Activated B cell treated with CpG ODN at 0.5 μM for 24 hours (primary cell): ENCODE measurements at regions of chr4 and their contacts with region 1.

Region 1: GRCh38 chr4:169485791-169486742 is 126.3 kb downstream of the NEK1 start:
- DNase-seq: no peak
- ATAC-seq: no peak
- H3K4me3 Mint-ChIP-seq: no peak overlapping the region
- H3K27ac Mint-ChIP-seq: no peak overlapping the region
- H3K4me1 Mint-ChIP-seq: no peaks in the 10 kb centered on the region
- H3K27me3 Mint-ChIP-seq: no peaks in the 10 kb centered on the region
- CTCF ChIP-seq: no peak

Region 2: DNA sequence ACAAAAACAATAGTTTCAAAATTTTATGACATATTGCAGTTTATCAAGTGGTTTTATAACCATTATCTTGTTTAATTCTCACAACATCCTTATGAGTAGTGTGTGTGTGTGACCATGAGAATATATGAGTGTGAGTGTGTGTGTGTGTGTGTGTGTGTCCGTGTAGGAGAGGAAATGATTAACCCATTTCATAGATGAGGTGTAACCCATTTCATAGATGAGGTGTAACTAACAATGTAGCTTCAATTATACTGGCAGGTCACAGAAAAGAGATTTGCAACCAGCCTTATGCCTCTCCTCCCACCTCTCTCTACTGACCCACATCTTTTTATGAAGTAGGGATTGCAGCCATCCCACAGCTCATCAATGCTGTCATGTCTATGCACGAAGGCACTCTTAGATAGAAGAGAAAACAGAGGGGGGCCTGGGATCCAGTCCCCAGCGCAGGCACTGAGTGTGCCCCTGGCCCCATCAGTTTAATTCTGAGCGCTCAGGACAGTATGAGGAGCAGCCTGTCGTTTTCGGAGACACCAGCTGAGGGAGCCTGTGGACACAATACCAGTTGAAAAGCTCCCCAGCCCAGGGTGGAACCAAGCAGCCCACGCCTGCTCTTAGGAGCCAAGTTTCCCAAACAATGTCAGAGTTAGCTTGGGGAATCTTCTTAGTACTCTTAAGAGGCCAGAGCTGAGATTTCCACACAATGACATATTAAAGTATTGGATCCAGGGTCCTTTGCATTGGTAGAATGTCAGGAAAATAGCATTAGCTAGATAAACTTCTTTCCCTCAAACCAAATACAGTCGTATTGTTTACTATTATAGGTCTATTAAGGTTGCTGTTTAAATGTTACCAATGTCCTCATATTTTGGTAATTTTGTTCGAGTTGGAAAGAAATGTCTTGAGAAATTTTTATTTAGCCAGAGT is 900.6 kb before region 1 on chr4:
- CTCF ChIA-PET with region 1: no interaction called
- POLR2A ChIA-PET with region 1: no interaction called
- intact Hi-C with region 1: loop called (anchors 5 kb)
- DNase-seq: no peak
- ATAC-seq: no peak
- H3K4me3 Mint-ChIP-seq: no peak overlapping the region
- H3K27ac Mint-ChIP-seq: no peak overlapping the region
- H3K4me1 Mint-ChIP-seq: no peaks in the 10 kb centered on the region
- H3K27me3 Mint-ChIP-seq: peaks cover 14% of the 10 kb centered on the region
- CTCF ChIP-seq: no peak

Region 3: DNA sequence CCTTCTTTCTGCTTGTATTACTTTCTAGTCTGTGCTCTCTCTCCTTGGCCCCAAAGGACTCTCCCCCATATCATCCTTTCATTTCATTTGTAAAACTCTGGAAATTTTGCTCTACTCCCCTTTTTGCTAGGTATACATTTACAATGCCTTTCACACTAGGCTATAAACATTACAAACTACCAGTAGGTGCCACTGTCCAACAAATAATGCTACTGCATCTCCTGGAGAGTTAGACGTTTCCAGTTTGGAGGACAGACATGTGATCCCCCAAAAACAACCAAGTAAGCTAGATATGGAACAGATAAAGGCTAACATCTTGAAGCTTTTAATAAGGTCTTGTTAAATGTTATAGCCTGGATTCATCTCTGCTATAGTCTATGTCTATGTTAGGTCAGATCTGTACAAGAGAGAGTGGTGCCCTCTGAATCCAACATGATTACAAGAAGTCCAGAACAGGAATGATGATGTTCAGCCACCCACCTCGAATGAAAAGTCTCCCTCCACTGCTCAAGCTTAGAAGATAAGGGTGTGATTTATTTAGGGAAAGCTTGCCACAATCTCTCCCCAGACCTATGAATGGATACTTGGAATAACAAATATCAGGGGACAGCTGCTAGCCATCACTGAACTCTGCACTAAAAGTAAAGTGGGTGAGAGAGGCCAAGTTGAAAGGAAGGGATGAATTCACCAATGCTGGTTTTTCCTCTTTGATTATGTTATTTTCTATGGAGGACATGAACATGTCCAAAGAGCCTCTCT is 490.4 kb before region 1 on chr4:
- CTCF ChIA-PET with region 1: interaction called, 3 read pairs
- POLR2A ChIA-PET with region 1: no interaction called
- intact Hi-C with region 1: loop called (anchors 1 kb)
- DNase-seq: no peak
- ATAC-seq: no peak
- H3K4me3 Mint-ChIP-seq: no peak overlapping the region
- H3K27ac Mint-ChIP-seq: no peak overlapping the region
- H3K4me1 Mint-ChIP-seq: peaks cover 2% of the 10 kb centered on the region
- H3K27me3 Mint-ChIP-seq: no peaks in the 10 kb centered on the region
- CTCF ChIP-seq: no peak

Region 4: DNA sequence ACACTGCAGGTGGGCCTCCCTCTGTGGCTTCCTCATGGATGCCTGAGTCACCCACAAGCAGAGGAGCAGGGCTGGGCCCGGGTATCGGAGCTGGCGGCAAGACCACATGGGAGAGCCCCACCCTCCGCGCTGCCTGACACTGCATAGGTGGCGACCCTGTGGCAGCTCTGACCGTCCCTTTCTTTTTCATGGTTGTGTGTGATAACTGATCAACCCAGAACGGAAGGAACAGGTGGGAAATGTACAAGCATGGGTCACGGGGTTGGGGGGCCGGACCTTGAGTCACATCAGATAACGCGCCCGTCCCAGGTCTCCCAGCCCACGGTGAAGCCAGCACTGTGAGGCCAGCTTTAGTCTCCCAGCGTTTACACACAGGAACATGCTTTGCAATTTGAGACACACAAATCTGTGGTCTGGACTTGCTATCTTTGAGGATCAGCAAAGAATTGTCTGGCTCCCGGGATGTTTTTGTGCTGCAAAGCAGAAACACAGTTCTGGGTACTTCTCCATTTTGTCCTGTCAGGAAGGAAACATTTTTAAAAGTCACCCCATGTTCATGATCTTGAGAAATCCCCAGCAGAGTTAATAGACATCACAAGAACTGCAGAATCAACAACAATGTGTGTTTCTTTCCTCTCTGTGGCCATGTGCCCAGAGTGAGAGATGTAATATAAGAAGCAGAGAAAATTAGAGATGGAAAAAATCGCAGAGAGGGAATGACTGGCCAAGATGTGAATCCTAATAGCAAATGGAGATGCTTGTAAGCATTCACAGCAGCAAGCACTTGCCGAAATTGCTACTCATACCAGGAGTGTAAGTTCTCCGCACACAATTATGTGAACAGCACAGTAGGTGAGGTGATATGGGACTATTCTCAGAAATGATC is 405.9 kb before region 1 on chr4:
- CTCF ChIA-PET with region 1: no interaction called
- POLR2A ChIA-PET with region 1: no interaction called
- intact Hi-C with region 1: loop called (anchors 10 kb)
- DNase-seq: peak; percentile 18
- ATAC-seq: peak; percentile 68
- H3K4me3 Mint-ChIP-seq: peak overlapping the region; percentile 56
- H3K27ac Mint-ChIP-seq: peak overlapping the region; percentile 5
- H3K4me1 Mint-ChIP-seq: peaks cover 25% of the 10 kb centered on the region
- H3K27me3 Mint-ChIP-seq: no peaks in the 10 kb centered on the region
- CTCF ChIP-seq: no peak

Region 5: DNA sequence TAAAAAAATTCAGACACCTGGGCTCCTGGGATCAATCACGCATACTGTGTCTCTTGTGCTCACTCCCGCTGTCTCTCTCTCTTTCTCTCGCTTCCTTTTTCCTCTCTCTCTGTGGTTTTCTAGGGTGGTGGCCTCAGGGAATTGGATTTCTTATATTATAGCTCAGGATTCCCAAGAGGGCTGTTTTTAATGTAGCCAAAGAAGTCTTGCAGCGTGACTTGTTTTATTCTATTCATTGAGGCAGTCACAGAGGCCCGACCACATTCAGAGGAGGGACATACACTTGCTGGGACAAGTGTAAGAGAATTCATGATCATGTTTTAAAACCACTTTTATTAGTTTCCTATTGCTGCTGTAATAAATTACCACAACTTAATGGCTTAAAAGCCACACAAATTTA is 212.3 kb after region 1 on chr4:
- CTCF ChIA-PET with region 1: no interaction called
- POLR2A ChIA-PET with region 1: no interaction called
- intact Hi-C with region 1: no loop called
- DNase-seq: no peak
- ATAC-seq: no peak
- H3K4me3 Mint-ChIP-seq: no peak overlapping the region
- H3K27ac Mint-ChIP-seq: no peak overlapping the region
- H3K4me1 Mint-ChIP-seq: peaks cover 12% of the 10 kb centered on the region
- H3K27me3 Mint-ChIP-seq: no peaks in the 10 kb centered on the region
- CTCF ChIP-seq: no peak